K562 (cell line): ENCODE measurements at regions of chr19 and their contacts with region 1.

Region 1: GRCh38 chr19:1269065-1269477 is at the start of gene CIRBP:
- DNase-seq: peak; percentile 86 to 99 (median 92)
- ATAC-seq: peak; percentile 71
- H3K4me3 ChIP-seq: peak within 1 kb of the TSS; percentile 68
- H3K27ac ChIP-seq: peak within 1 kb of the TSS; percentile 92
- H3K4me1 ChIP-seq: peaks cover 71 to 97% of the 10 kb centered on the region in 2 experiments
- H3K27me3 ChIP-seq: no peaks in the 10 kb centered on the region
- CTCF ChIP-seq: no peak
- EP300 ChIP-seq: no peak
- POLR2A ChIP-seq: peak; percentile 99
- RAD21 ChIP-seq: 0 out of 4 replicates have a peak, but pooled peaks of 1 of the 2 experiments have one; percentile 5
- polyA plus RNA-seq, gene CIRBP: 20.5 to 21.4 TPM

Region 2: GRCh38 chr19:1026189-1027019 is 242.7 kb before region 1 on chr19 and contains the start of gene CNN2:
- CTCF ChIA-PET with region 1: no interaction called
- POLR2A ChIA-PET with region 1: interaction called, 10 read pairs
- in situ Hi-C with region 1: no loop called
- intact Hi-C with region 1: no loop called
- DNase-seq: peak; percentile 76 to 88 (median 82)
- ATAC-seq: peak; percentile 89
- H3K4me3 ChIP-seq: peak within 1 kb of the TSS; percentile 87
- H3K27ac ChIP-seq: peak within 1 kb of the TSS; percentile 98
- H3K4me1 ChIP-seq: peaks cover 22 to 73% of the 10 kb centered on the region in 2 experiments
- H3K27me3 ChIP-seq: no peaks in the 10 kb centered on the region
- CTCF ChIP-seq: no peak
- EP300 ChIP-seq: no peak
- POLR2A ChIP-seq: peak; percentile 74
- RAD21 ChIP-seq: no peak
- polyA plus RNA-seq, gene CNN2: 12.1 to 12.8 TPM

Region 3: DNA sequence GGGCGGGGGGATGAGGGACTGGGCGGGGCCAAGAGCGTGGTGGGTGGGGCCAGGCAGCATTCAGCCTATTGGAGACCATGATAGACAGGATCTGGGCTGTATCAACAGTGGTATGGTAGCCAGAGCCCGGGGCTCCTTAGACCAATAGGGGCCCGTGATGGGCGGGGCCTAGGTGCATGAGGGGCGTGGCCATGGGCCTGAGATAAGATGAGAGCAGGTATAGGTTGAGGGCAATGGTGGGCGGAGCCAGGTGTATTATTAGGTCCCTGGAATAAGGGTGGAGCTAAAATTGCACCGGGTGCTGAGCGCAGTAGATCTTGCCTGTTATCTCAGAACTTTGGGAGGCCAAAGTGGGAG is 223.8 kb before region 1 on chr19:
- CTCF ChIA-PET with region 1: no interaction called
- POLR2A ChIA-PET with region 1: interaction called, 4 read pairs
- in situ Hi-C with region 1: no loop called
- intact Hi-C with region 1: loop called (anchors 1 kb)
- DNase-seq: peak; percentile 91 to 99 (median 96)
- ATAC-seq: peak; percentile 84
- H3K4me3 ChIP-seq: no peak overlapping the region
- H3K27ac ChIP-seq: no peak overlapping the region
- H3K4me1 ChIP-seq: peaks cover 18 to 66% of the 10 kb centered on the region in 2 experiments
- H3K27me3 ChIP-seq: no peaks in the 10 kb centered on the region
- CTCF ChIP-seq: no peak
- EP300 ChIP-seq: no peak
- POLR2A ChIP-seq: no peak; the same call in 1 of the 2 replicates
- RAD21 ChIP-seq: no peak

Region 4: GRCh38 chr19:1249298-1249989 is 19.6 kb before region 1 on chr19:
- CTCF ChIA-PET with region 1: interaction called, 51 read pairs
- POLR2A ChIA-PET with region 1: interaction called, 90 read pairs
- in situ Hi-C with region 1: no loop called
- intact Hi-C with region 1: loop called (anchors 1 kb)
- DNase-seq: peak; percentile 70 to 97 (median 82)
- ATAC-seq: peak; percentile 45
- H3K4me3 ChIP-seq: peak overlapping the region; percentile 93
- H3K27ac ChIP-seq: peak overlapping the region; percentile 99
- H3K4me1 ChIP-seq: peaks cover 41 to 95% of the 10 kb centered on the region in 2 experiments
- H3K27me3 ChIP-seq: no peaks in the 10 kb centered on the region
- CTCF ChIP-seq: no peak
- EP300 ChIP-seq: no peak
- POLR2A ChIP-seq: peak; percentile 76
- RAD21 ChIP-seq: no peak

Region 5: DNA sequence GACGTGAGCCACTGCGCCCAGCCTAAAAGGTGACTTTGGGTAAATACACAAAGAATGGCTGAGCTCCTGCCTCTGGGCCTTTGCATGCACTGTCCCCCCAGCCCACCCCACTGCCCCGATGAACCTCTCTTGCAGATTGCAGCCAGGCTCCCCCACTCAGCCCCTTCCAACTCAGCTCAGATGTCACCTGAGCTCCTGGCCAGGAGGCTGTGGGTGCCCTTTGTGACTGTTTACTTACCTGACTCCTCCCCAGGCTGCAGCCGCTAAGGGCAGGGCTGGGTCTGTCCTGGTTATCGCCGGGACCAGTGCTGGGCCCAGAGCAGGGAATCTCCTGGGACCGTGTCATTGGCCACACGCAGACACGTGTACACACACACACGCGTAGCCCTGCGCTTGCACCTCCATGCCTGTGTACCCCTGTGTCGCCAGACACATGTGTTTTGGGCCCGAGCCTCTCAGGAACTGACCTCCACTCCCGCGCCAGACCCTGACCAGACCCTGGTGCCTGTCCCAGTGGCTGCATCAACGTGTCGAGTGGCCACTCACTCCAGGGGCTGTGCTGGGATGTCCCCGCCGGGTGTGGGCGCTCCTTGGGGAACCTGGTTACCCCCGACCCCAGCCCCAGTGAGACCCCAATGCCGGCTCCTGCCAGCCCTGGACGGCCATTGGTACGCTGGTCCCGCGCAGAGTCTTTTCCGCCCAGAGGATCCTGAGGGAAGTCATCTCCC is 35.3 kb after region 1 on chr19:
- CTCF ChIA-PET with region 1: no interaction called
- POLR2A ChIA-PET with region 1: interaction called, 13 read pairs
- in situ Hi-C with region 1: no loop called
- intact Hi-C with region 1: no loop called
- DNase-seq: peak in 1 of 4 experiments; percentile 36
- ATAC-seq: peak; percentile 41
- H3K4me3 ChIP-seq: no peak overlapping the region
- H3K27ac ChIP-seq: no peak overlapping the region
- H3K4me1 ChIP-seq: peaks cover 6 to 55% of the 10 kb centered on the region in 2 experiments
- H3K27me3 ChIP-seq: peaks cover 6 to 11% of the 10 kb centered on the region in 2 experiments; a peak in 3 of 5 replicates
- CTCF ChIP-seq: no peak
- EP300 ChIP-seq: no peak
- POLR2A ChIP-seq: no peak
- RAD21 ChIP-seq: no peak

Region 6: DNA sequence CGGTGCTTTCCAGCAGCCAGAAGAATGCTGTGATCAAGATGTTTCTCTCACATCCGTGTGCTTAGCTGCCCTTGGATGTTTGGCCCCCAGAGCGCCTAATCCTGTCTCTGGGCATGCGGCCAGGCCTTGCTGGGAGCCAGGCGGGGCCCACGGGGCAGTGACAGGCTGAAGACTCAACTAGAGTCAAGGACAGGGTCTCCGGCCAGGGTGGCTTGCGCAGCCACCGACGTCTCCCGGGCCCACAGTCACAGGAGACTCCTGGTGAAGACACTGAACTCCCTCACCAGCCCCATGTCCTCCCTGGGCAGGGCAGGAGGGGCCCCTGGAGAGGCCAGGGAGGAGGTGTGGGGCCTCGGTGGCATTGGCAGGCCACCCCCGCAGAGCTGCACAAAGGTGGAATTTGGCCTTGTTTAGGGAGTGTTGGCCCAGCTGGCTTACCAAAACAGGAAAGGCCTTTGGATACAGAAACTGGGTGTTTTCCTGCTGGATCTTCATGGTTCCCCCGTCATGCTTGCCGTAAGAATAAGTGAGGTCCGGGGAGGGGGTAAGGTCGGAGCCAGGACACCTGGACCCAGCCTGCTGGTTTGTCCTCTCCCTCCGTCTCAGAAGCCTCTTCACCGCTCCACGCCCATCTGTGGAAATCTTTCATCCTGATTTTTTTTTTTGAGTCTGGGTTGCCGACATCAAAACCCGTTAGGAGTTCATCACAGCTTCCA is 104.6 kb after region 1 on chr19:
- CTCF ChIA-PET with region 1: no interaction called
- POLR2A ChIA-PET with region 1: interaction called, 10 read pairs
- in situ Hi-C with region 1: no loop called
- intact Hi-C with region 1: no loop called
- DNase-seq: no peak
- ATAC-seq: no peak
- H3K4me3 ChIP-seq: no peak overlapping the region
- H3K27ac ChIP-seq: no peak overlapping the region
- H3K4me1 ChIP-seq: peaks cover 0 to 50% of the 10 kb centered on the region in 2 experiments; a peak in 2 of 5 replicates
- H3K27me3 ChIP-seq: no peaks in the 10 kb centered on the region
- CTCF ChIP-seq: no peak
- EP300 ChIP-seq: no peak
- POLR2A ChIP-seq: no peak
- RAD21 ChIP-seq: no peak

Region 7: DNA sequence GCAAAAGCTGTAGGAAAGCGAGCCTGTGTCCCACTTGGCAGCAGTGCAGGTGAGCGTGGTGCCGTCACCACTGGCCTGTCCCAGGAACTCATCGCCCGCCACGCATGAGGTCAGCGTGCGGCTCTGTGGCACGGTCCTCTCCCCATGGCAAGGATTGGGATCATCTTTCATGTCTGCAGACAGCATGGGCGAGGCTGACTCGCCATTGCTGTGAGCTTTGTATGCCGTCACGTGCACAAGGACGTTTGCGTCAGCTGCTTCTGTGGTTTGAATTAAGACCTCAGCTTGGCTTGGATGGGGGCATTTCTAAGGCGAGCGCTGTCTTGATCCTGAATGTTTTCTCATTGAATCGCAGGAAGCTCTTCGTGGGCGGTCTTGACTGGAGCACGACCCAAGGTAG is 148.1 kb after region 1 on chr19:
- CTCF ChIA-PET with region 1: no interaction called
- POLR2A ChIA-PET with region 1: interaction called, 13 read pairs
- in situ Hi-C with region 1: no loop called
- intact Hi-C with region 1: no loop called
- DNase-seq: no peak
- ATAC-seq: no peak
- H3K4me3 ChIP-seq: no peak overlapping the region
- H3K27ac ChIP-seq: no peak overlapping the region
- H3K4me1 ChIP-seq: peaks cover 24 to 64% of the 10 kb centered on the region in 2 experiments
- H3K27me3 ChIP-seq: no peaks in the 10 kb centered on the region
- CTCF ChIP-seq: no peak
- EP300 ChIP-seq: no peak
- POLR2A ChIP-seq: no peak
- RAD21 ChIP-seq: no peak